ENCODE measurements at regions of chr1 and their contacts with region 1.

Region 1: DNA sequence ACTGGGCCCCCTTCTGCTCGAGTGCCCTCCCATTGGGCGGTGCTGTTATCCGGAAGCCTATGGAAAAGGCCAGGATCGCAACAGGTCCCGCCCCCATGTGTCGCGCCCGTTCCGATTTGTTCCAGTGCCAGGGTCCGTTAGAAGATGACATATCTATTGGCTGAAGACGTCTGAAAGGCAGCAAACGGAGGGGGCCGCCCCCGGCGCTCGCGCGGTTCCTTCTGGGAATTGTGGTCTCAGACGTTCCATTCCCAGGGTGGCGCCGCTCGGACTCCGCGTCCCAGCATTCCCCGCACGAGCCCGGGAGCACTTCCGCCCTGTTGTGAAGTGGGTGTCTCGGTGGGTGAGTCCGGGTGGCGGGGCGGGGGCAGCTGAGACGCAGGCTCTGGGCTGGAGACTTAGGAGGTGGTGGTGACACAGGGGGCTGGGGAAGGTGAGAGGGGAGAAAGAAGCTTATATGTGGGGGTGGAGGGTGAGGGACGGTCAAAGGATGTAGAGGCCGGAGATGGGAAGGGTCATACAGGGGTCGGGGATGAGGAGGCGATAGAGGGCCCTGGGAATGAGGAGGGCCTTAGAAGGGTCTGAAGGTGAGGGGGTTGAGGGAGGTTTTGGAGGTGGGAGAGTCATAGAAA is at the start of gene ZSCAN20:
- DNase-seq: peak; percentile 98 to 99
- ATAC-seq: peak; percentile 94
- H3K4me3 ChIP-seq: peak within 1 kb of the TSS; percentile 5 to 55
- H3K27ac ChIP-seq: peak within 1 kb of the TSS; percentile 47 to 74
- H3K4me1 ChIP-seq: peaks cover 5 to 10% of the 10 kb centered on the region in 2 donors
- H3K27me3 ChIP-seq: no peaks in the 10 kb centered on the region
- total RNA-seq, gene ZSCAN20: 5.9 to 8.0 TPM

Region 2: DNA sequence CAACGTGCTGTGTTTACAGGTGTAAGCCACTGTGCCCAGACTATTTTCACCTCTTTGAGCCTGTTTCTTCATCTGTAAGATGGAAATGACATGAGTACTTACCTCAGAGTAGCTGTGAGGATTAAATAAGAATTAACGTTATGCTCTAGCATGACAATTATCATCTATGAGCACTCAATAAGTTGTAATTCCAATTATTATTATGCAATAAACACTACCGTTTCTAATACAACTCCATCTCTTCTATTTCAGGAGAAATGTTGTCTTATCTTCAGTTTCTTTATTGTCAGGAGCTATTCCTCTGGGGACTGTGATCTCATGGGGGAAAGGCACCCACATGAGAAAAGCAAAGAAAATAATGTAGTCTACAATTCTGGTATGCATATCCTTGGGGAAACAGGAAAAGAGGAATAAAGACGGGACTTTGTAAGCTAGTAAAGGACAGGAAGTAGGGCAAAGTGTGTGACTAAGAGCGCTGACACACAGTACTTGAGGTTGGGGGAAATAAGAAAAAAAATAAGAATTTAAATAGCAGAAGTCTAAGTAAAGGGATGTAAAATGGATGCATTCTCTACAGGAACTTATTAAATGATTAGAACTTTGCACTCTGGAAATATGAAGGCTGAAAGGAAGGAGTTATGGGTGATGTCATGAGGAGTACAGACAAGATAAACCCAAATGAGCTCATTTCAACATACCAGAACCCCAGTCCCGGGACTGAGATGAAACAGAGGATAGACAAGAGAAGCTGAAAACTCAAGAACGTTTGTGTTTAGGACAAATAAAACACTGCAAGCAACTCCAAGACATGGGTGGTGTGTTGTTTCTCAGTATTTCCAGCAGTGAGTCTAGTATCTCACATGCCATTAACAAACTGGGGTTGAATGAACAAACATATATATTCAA is 51.3 kb before region 1 on chr1:
- intact Hi-C with region 1: no loop called
- DNase-seq: no peak
- ATAC-seq: no peak
- H3K4me3 ChIP-seq: no peak overlapping the region
- H3K27ac ChIP-seq: no peak overlapping the region
- H3K4me1 ChIP-seq: no peaks in the 10 kb centered on the region
- H3K27me3 ChIP-seq: no peaks in the 10 kb centered on the region

Region 3: DNA sequence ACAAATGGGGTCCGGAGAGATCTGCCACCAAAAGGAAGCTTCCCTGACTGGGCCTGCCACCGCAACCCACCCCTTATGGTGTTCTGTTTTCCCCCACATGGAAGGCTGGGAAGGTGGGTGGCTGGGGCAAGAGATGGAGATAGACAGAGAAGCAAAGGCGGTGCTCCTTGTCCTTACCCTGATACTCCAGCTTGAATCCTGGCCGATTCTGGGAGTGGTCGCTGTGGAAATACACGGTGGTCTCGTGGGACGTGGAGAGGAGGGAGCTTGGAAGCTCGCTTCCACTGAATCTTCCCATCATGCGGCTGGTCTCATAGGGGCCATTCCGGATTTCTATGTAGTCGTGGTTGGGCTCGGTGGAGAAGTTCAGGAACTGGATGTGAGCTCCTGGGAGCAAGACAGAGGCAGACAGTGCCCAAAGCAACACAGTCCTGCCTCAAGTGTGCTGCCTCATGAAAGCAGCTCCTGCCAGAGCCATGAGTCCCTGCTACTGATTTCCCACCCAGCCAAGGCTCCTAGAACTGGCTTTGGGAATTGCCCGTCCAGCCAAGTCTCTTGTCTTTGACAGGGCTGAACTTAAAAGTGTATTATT is 138.5 kb after region 1 on chr1:
- intact Hi-C with region 1: loop called (anchors 5 kb)
- DNase-seq: no peak
- ATAC-seq: no peak
- H3K4me3 ChIP-seq: no peak overlapping the region
- H3K27ac ChIP-seq: peak overlapping the region in 1 of 2 donors; percentile 48
- H3K4me1 ChIP-seq: peaks cover 0 to 1% of the 10 kb centered on the region in 2 donors
- H3K27me3 ChIP-seq: no peaks in the 10 kb centered on the region